ENCODE measurements at regions of chr10 and their contacts with region 1.

Region 1: DNA sequence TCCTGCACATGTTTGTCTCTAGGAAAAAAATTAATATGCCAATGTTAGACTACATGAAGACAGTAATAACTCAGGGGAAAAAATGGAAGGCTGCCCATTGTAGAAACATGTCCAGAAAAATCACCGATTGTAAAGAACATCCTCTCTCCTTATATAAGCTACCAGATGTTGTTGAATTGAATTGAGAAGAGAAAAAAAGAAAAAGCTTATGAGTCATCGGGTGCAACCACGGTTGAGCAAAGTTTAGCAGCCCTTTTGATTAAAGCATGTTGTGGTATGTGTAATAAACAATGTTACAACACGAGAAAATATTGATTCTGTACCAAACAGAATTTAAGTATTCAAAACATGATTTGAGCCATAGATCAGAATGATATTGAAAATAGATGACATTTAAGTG is 102.3 kb upstream of the ARHGAP21 start:
- DNase-seq: no peak
- H3K4me3 Mint-ChIP-seq: peak overlapping the region; percentile 60
- H3K27ac Mint-ChIP-seq: no peak overlapping the region
- H3K4me1 Mint-ChIP-seq: peaks cover 31% of the 10 kb centered on the region
- H3K27me3 Mint-ChIP-seq: no peaks in the 10 kb centered on the region

Region 2: DNA sequence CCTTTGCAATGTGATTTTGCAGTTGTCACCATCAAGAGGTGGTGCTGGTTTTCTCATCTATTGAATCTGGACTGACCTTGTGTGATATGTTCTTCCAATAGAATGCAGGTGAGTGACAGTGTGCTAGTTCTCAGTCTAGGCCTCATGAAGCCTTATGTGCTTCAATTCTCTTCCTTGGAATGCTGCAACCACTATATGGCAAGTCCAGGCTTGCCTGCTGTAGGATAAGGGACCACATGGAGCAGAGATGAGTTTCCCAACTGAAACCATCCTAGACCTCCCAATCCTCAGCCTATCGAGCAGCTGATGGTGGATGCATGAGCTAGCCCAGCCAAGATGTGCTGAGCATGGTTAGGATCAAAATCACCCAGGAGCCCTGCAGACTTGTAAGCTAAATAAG is 69.7 kb before region 1 on chr10:
- intact Hi-C with region 1: no loop called
- DNase-seq: no peak
- H3K4me3 Mint-ChIP-seq: no peak overlapping the region
- H3K27ac Mint-ChIP-seq: no peak overlapping the region
- H3K4me1 Mint-ChIP-seq: no peaks in the 10 kb centered on the region
- H3K27me3 Mint-ChIP-seq: no peaks in the 10 kb centered on the region

Region 3: DNA sequence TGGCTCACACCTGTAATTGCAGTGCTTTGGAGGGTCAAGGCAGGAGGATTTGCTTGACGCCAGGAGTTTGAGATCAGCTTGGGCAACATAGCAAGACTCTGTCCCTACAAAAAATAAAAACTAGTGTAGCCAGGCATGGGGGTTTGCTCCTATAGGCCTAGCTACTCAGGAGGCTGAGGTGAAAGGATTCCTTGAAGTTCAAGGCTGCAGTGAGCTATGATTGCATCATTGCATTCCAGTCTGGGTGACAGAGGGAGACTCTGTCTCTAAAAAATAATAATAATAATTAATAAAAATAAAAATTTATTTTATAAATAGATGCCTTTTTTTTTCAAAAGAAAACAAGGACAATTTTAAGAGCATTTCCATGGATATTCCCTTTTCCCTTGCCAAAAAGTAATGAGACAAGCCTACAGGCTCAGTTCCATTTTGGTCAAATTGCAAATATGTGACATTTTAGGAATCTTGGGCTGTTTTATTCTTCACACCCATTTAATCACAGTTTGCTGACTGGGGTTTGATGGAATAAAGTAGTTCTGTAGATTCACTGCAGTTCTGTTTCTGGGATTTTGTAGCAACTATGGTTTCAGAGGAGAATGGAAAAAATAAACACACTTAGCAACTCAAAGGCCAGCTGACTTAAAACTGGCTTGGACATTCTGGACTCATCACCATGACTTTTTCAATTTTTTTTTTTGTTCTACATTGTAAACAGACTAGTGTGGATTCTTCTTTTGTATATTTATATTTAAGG is 53.9 kb before region 1 on chr10:
- intact Hi-C with region 1: loop called (anchors 1 kb)
- DNase-seq: no peak
- H3K4me3 Mint-ChIP-seq: no peak overlapping the region
- H3K27ac Mint-ChIP-seq: no peak overlapping the region
- H3K4me1 Mint-ChIP-seq: peaks cover 6% of the 10 kb centered on the region
- H3K27me3 Mint-ChIP-seq: no peaks in the 10 kb centered on the region

Region 4: GRCh38 chr10:24887855-24888231 is 61.8 kb after region 1 on chr10:
- intact Hi-C with region 1: loop called (anchors 5 kb)
- DNase-seq: no peak
- H3K4me3 Mint-ChIP-seq: peak overlapping the region; percentile 60
- H3K27ac Mint-ChIP-seq: no peak overlapping the region
- H3K4me1 Mint-ChIP-seq: peaks cover 26% of the 10 kb centered on the region
- H3K27me3 Mint-ChIP-seq: no peaks in the 10 kb centered on the region

Region 5: GRCh38 chr10:24920907-24921881 is 95.2 kb after region 1 on chr10:
- intact Hi-C with region 1: loop called (anchors 1 kb)
- DNase-seq: peak; percentile 77
- H3K4me3 Mint-ChIP-seq: peak overlapping the region; percentile 55
- H3K27ac Mint-ChIP-seq: peak overlapping the region; percentile 93
- H3K4me1 Mint-ChIP-seq: peaks cover 23% of the 10 kb centered on the region
- H3K27me3 Mint-ChIP-seq: no peaks in the 10 kb centered on the region